ENCODE measurements at regions of chr3 and their contacts with region 1.

Region 1: GRCh38 chr3:63193629-63194028 is 84.5 kb upstream of the SYNPR start:
- DNase-seq: peak; percentile 37
- H3K4me3 ChIP-seq: no peak overlapping the region; a peak in 1 of 4 replicates
- H3K27ac ChIP-seq: no peak overlapping the region
- H3K4me1 ChIP-seq: no peaks in the 10 kb centered on the region
- H3K27me3 ChIP-seq: no peaks in the 10 kb centered on the region
- CTCF ChIP-seq: peak; percentile 83
- EP300 ChIP-seq: no peak
- RAD21 ChIP-seq: peak; percentile 93

Region 2: GRCh38 chr3:62622553-62623193 is 571.0 kb before region 1 on chr3:
- CTCF ChIA-PET with region 1: interaction called, 28 read pairs
- POLR2A ChIA-PET with region 1: no interaction called
- DNase-seq: peak; percentile 44
- H3K4me3 ChIP-seq: no peak overlapping the region; a peak in 1 of 4 replicates
- H3K27ac ChIP-seq: no peak overlapping the region
- H3K4me1 ChIP-seq: no peaks in the 10 kb centered on the region
- H3K27me3 ChIP-seq: no peaks in the 10 kb centered on the region
- CTCF ChIP-seq: peak; percentile 76
- EP300 ChIP-seq: no peak
- RAD21 ChIP-seq: peak; percentile 87

Region 3: DNA sequence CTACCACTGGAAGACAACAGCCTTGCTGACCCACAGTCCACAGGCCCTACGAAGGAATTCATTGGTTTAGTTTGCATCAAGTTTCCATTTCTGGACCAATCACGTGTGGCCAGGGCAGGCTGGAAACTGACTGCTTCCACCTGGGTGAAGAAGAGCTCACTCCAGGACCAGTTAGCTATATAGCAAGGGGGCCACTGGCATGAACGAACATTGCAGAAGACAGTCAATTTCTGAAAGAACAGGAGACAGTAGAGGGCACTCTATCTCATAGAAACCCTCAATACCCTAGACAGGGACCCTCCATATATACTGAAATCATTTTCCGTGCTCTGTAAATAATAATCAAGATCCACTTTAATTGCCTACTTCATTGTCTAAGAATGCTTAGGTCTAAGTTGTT is 534.0 kb before region 1 on chr3:
- CTCF ChIA-PET with region 1: interaction called, 126 read pairs
- POLR2A ChIA-PET with region 1: no interaction called
- DNase-seq: no peak
- H3K4me3 ChIP-seq: no peak overlapping the region
- H3K27ac ChIP-seq: no peak overlapping the region
- H3K4me1 ChIP-seq: peaks cover 0 to 12% of the 10 kb centered on the region in 2 experiments; a peak in 2 of 4 replicates
- H3K27me3 ChIP-seq: no peaks in the 10 kb centered on the region
- CTCF ChIP-seq: peak; percentile 28
- EP300 ChIP-seq: no peak
- RAD21 ChIP-seq: peak; percentile 21; the same call in 1 of the 2 replicates

Region 4: DNA sequence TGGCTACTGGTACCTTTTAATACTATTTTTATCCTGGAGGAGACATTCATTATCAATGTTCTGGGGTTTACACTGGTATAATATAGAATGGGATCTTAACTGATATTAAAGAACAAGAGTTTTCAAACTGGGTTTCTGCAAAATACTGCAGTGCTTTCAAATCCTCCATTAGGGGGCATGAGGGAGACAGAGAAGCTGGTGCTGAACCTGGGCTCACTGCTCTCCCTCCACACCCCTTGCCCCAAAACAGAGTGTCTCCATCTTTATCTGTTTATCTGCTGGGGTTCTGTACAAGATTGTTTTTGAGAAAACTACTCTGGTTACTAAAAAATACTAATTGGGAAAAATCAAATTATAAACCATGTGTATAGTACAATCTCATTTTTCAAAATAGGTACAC is 360.1 kb before region 1 on chr3:
- CTCF ChIA-PET with region 1: interaction called, 23 read pairs
- POLR2A ChIA-PET with region 1: no interaction called
- DNase-seq: peak; percentile 11
- H3K4me3 ChIP-seq: no peak overlapping the region
- H3K27ac ChIP-seq: no peak overlapping the region
- H3K4me1 ChIP-seq: no peaks in the 10 kb centered on the region; a peak in 1 of 4 replicates
- H3K27me3 ChIP-seq: no peaks in the 10 kb centered on the region
- CTCF ChIP-seq: peak; percentile 61
- EP300 ChIP-seq: no peak
- RAD21 ChIP-seq: peak; percentile 63

Region 5: GRCh38 chr3:62873761-62874647 is 319.6 kb before region 1 on chr3:
- CTCF ChIA-PET with region 1: interaction called, 44 read pairs
- POLR2A ChIA-PET with region 1: no interaction called
- DNase-seq: peak; percentile 81
- H3K4me3 ChIP-seq: peak overlapping the region; percentile 61 to 66
- H3K27ac ChIP-seq: peak overlapping the region; percentile 50 to 63
- H3K4me1 ChIP-seq: peaks cover 0 to 15% of the 10 kb centered on the region in 2 experiments; a peak in 2 of 4 replicates
- H3K27me3 ChIP-seq: no peaks in the 10 kb centered on the region
- CTCF ChIP-seq: peak; percentile 53
- EP300 ChIP-seq: no peak
- RAD21 ChIP-seq: peak; percentile 56

Region 6: GRCh38 chr3:63228087-63229023 is 34.7 kb after region 1 on chr3:
- CTCF ChIA-PET with region 1: interaction called, 16 read pairs
- POLR2A ChIA-PET with region 1: no interaction called
- DNase-seq: peak; percentile 33
- H3K4me3 ChIP-seq: peak overlapping the region in 1 of 2 experiments; percentile 20; a peak in 1 of 4 replicates
- H3K27ac ChIP-seq: no peak overlapping the region
- H3K4me1 ChIP-seq: no peaks in the 10 kb centered on the region
- H3K27me3 ChIP-seq: no peaks in the 10 kb centered on the region
- CTCF ChIP-seq: peak; percentile 73
- EP300 ChIP-seq: no peak
- RAD21 ChIP-seq: peak; percentile 77

Region 7: GRCh38 chr3:63519426-63519825 is 325.8 kb after region 1 on chr3:
- CTCF ChIA-PET with region 1: no interaction called
- POLR2A ChIA-PET with region 1: no interaction called
- DNase-seq: no peak
- H3K4me3 ChIP-seq: no peak overlapping the region
- H3K27ac ChIP-seq: no peak overlapping the region
- H3K4me1 ChIP-seq: no peaks in the 10 kb centered on the region
- H3K27me3 ChIP-seq: no peaks in the 10 kb centered on the region; the same call in 1 of the 2 replicates
- CTCF ChIP-seq: no peak
- EP300 ChIP-seq: no peak
- RAD21 ChIP-seq: no peak

Measured in SK-N-SH (cell line).